AG04450 (cell line): ENCODE measurements at regions of chr10 and their contacts with region 1.

Region 1: DNA sequence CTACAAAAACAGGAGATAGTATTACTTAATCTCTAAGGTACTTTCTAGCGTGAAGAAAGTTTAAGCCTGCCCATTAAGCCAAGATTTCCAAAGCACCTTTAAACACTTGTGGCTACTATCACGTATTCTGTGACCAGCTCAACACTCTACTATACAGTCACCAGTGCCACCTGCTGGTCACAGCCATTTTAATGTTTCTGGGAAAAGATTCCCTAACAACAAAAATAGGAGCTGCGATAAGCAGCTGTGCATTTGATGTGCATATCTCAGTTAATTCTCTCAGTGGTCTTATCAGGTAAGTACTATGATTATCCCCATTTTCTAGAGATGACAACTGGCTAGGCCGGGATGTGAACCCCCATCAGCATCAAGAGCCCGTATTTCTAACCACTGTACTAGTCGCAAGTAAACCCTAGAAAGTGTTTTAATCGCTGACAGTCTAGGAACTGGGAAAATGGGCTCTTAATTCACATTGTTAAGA is 860 bp downstream of the SEC31B start:
- DNase-seq: no peak
- H3K4me3 ChIP-seq: no peak overlapping the region; the same call in 1 of the 2 replicates
- H3K27ac ChIP-seq: no peak overlapping the region
- H3K27me3 ChIP-seq: no peaks in the 10 kb centered on the region
- CTCF ChIP-seq: peak; percentile 69

Region 2: GRCh38 chr10:100346765-100347567 is 171.8 kb before region 1 on chr10 and contains the start of gene SCD:
- CTCF ChIA-PET with region 1: interaction called, 19 read pairs
- POLR2A ChIA-PET with region 1: interaction called, 5 read pairs
- DNase-seq: peak; percentile 72
- H3K4me3 ChIP-seq: peak within 1 kb of the TSS; percentile 86
- H3K27ac ChIP-seq: peak within 1 kb of the TSS; percentile 57
- H3K27me3 ChIP-seq: no peaks in the 10 kb centered on the region
- CTCF ChIP-seq: no peak
- polyA plus RNA-seq, gene SCD: 133 and 148 TPM in 2 replicates

Region 3: DNA sequence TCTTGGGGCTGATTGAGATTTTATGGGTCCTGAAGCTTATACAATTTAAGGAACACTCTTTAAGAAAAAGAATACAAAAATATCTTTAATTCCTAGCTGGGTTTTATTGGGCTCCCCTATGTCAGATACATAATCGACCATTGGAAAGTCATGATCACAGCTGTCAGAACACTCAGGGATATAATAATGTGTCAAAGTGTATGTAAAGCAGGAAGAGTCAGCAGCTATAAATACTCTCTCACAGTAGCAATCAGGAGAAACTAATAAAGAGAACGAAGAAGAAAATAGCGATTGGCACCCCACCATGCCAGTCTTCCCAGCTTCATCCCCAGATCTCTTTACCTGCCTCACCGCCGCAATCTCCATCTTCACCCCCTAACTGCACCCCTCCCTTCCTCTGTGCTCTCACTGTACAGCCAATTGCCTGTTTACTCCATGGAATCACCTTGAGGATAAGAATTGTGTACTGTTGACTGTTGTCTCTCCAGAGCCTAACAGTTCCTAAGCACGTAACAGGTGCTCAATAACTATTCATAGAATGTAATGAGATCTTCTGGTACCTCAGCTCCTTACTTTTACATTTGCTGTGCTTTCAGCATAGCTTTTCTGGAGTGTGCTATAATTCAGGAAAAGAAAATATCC is 80.0 kb before region 1 on chr10:
- CTCF ChIA-PET with region 1: interaction called, 137 read pairs
- POLR2A ChIA-PET with region 1: no interaction called
- DNase-seq: no peak
- H3K4me3 ChIP-seq: no peak overlapping the region
- H3K27ac ChIP-seq: no peak overlapping the region
- H3K27me3 ChIP-seq: no peaks in the 10 kb centered on the region
- CTCF ChIP-seq: no peak

Region 4: GRCh38 chr10:100481462-100482081 is 37.2 kb before region 1 on chr10:
- CTCF ChIA-PET with region 1: interaction called, 29 read pairs
- POLR2A ChIA-PET with region 1: no interaction called
- DNase-seq: peak; percentile 59
- H3K4me3 ChIP-seq: peak overlapping the region; percentile 53
- H3K27ac ChIP-seq: no peak overlapping the region
- H3K27me3 ChIP-seq: peaks cover 67% of the 10 kb centered on the region
- CTCF ChIP-seq: no peak

Region 5: GRCh38 chr10:100508691-100509150 is 10.1 kb before region 1 on chr10:
- CTCF ChIA-PET with region 1: interaction called, 31 read pairs
- POLR2A ChIA-PET with region 1: no interaction called
- DNase-seq: peak; percentile 24
- H3K4me3 ChIP-seq: no peak overlapping the region
- H3K27ac ChIP-seq: no peak overlapping the region
- H3K27me3 ChIP-seq: no peaks in the 10 kb centered on the region
- CTCF ChIP-seq: peak; percentile 78

Region 6: GRCh38 chr10:100535715-100536353 is 17.0 kb after region 1 on chr10 and contains the start of gene HIF1AN:
- CTCF ChIA-PET with region 1: interaction called, 33 read pairs
- POLR2A ChIA-PET with region 1: interaction called, 5 read pairs
- DNase-seq: peak; percentile 89
- H3K4me3 ChIP-seq: peak within 1 kb of the TSS; percentile 88
- H3K27ac ChIP-seq: no peak within 1 kb of the TSS
- H3K27me3 ChIP-seq: no peaks in the 10 kb centered on the region
- CTCF ChIP-seq: peak; percentile 98
- polyA plus RNA-seq, gene HIF1AN: 29.7 and 31.0 TPM in 2 replicates

Region 7: GRCh38 chr10:100614429-100615095 is 95.8 kb after region 1 on chr10:
- CTCF ChIA-PET with region 1: no interaction called
- POLR2A ChIA-PET with region 1: no interaction called
- DNase-seq: no peak
- H3K4me3 ChIP-seq: no peak overlapping the region
- H3K27ac ChIP-seq: no peak overlapping the region
- H3K27me3 ChIP-seq: peaks cover 17% of the 10 kb centered on the region
- CTCF ChIP-seq: no peak